Mammary epithelial cell (primary cell): ENCODE measurements at regions of chr10 and their contacts with region 1.

Region 1: GRCh38 chr10:98790802-98791201 is 344.1 kb upstream of the HPS1 start:
- DNase-seq: no peak
- H3K4me3 ChIP-seq: no peak overlapping the region
- H3K27ac ChIP-seq: no peak overlapping the region
- H3K4me1 ChIP-seq: no peaks in the 10 kb centered on the region
- H3K27me3 ChIP-seq: no peaks in the 10 kb centered on the region
- CTCF ChIP-seq: peak; percentile 44 to 57

Region 2: GRCh38 chr10:98899018-98899417 is 108.2 kb after region 1 on chr10:
- CTCF ChIA-PET with region 1: no interaction called
- dilution Hi-C with region 1: no loop called
- in situ Hi-C with region 1: no loop called
- intact Hi-C with region 1: no loop called
- DNase-seq: no peak
- H3K4me3 ChIP-seq: no peak overlapping the region
- H3K27ac ChIP-seq: no peak overlapping the region
- H3K4me1 ChIP-seq: no peaks in the 10 kb centered on the region
- H3K27me3 ChIP-seq: no peaks in the 10 kb centered on the region
- CTCF ChIP-seq: no peak

Region 3: GRCh38 chr10:99172130-99172738 is 381.4 kb after region 1 on chr10:
- CTCF ChIA-PET with region 1: no interaction called
- dilution Hi-C with region 1: no loop called
- in situ Hi-C with region 1: no loop called
- intact Hi-C with region 1: loop called (anchors 5 kb)
- DNase-seq: peak; percentile 29
- H3K4me3 ChIP-seq: no peak overlapping the region
- H3K27ac ChIP-seq: no peak overlapping the region
- H3K4me1 ChIP-seq: no peaks in the 10 kb centered on the region
- H3K27me3 ChIP-seq: no peaks in the 10 kb centered on the region
- CTCF ChIP-seq: peak; percentile 69 to 91

Region 4: DNA sequence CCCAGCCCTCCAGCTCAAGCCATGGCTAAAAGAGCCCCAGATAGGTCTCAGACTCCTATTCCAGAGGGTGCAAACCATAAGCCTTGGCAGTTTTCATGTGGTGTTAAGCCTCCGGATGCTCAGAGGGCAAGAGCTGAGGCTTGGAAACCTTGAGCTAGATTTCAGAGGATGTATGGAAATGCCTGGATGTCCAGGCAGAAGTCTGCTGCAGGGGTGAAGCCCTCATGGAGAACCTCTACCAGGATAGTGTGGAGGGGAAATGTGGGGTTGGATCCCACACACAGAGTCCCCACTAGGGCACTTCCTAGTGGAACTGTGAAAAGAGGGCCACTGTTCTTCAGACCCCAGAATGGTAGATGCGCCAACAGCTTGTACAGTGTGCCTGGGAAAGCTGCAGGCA is 458.0 kb after region 1 on chr10:
- CTCF ChIA-PET with region 1: no interaction called
- dilution Hi-C with region 1: no loop called
- in situ Hi-C with region 1: no loop called
- intact Hi-C with region 1: loop called (anchors 5 kb)
- DNase-seq: no peak
- H3K4me3 ChIP-seq: no peak overlapping the region
- H3K27ac ChIP-seq: no peak overlapping the region
- H3K4me1 ChIP-seq: no peaks in the 10 kb centered on the region
- H3K27me3 ChIP-seq: no peaks in the 10 kb centered on the region
- CTCF ChIP-seq: no peak